WTC11 (cell line): ENCODE measurements at regions of chr6 and their contacts with region 1.

Region 1: DNA sequence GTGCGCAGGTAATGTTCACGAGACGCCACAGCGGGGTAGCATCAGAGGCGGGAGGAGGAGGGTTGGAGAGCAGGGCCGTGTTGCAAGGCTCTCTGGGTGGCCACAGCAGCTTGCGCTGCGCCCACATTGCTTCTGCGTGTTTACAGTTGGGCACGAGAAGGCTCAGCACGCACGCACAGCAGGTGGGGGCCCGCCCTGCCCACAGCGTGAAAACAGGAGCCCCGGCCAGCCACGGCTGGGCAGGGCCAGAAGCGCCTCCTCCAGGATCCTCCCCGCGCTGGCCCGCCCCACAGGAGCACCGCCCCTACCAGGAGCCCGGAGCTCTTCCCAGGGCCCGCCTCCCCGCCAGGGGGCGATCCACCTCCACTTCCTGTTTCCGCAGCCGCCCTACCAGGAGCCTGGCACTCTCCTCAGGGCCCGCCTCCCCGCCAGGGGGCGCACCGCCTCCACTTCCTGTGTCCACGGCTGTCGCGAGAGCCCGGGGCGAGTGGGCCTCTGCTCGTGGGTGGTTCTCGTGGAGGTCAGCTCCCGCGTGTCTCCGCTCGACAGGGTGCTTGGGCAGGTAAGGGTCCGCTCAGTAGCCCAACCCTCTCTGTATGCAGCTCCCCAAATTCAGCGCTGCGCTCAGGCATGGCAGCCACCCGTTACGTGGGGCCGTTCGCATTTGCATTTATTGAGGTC is at the start of gene FAM50B:
- DNase-seq: peak; percentile 98
- ATAC-seq: peak; percentile 98
- H3K4me3 Mint-ChIP-seq: peak within 1 kb of the TSS; percentile 80
- H3K27ac Mint-ChIP-seq: no peak within 1 kb of the TSS
- H3K4me1 Mint-ChIP-seq: peaks cover 9% of the 10 kb centered on the region
- H3K27me3 Mint-ChIP-seq: peaks cover 6% of the 10 kb centered on the region
- CTCF ChIP-seq: peak; percentile 100
- total RNA-seq, gene FAM50B: 2.1 to 3.6 TPM (median 3.3 TPM) in 3 replicates

Region 2: GRCh38 chr6:3794092-3794491 is 55.0 kb before region 1 on chr6:
- CTCF ChIA-PET with region 1: interaction called, 28 read pairs
- POLR2A ChIA-PET with region 1: no interaction called
- DNase-seq: no peak
- ATAC-seq: peak; percentile 71
- H3K4me3 Mint-ChIP-seq: no peak overlapping the region
- H3K27ac Mint-ChIP-seq: peak overlapping the region; percentile 53
- H3K4me1 Mint-ChIP-seq: peaks cover 23% of the 10 kb centered on the region
- H3K27me3 Mint-ChIP-seq: no peaks in the 10 kb centered on the region
- CTCF ChIP-seq: no peak

Region 3: GRCh38 chr6:3861424-3861823 is 12.4 kb after region 1 on chr6:
- CTCF ChIA-PET with region 1: interaction called, 78 read pairs
- POLR2A ChIA-PET with region 1: no interaction called
- DNase-seq: no peak
- ATAC-seq: no peak
- H3K4me3 Mint-ChIP-seq: no peak overlapping the region
- H3K27ac Mint-ChIP-seq: no peak overlapping the region
- H3K4me1 Mint-ChIP-seq: peaks cover 15% of the 10 kb centered on the region
- H3K27me3 Mint-ChIP-seq: peaks cover 6% of the 10 kb centered on the region; the same call in 1 of the 2 replicates
- CTCF ChIP-seq: no peak

Region 4: DNA sequence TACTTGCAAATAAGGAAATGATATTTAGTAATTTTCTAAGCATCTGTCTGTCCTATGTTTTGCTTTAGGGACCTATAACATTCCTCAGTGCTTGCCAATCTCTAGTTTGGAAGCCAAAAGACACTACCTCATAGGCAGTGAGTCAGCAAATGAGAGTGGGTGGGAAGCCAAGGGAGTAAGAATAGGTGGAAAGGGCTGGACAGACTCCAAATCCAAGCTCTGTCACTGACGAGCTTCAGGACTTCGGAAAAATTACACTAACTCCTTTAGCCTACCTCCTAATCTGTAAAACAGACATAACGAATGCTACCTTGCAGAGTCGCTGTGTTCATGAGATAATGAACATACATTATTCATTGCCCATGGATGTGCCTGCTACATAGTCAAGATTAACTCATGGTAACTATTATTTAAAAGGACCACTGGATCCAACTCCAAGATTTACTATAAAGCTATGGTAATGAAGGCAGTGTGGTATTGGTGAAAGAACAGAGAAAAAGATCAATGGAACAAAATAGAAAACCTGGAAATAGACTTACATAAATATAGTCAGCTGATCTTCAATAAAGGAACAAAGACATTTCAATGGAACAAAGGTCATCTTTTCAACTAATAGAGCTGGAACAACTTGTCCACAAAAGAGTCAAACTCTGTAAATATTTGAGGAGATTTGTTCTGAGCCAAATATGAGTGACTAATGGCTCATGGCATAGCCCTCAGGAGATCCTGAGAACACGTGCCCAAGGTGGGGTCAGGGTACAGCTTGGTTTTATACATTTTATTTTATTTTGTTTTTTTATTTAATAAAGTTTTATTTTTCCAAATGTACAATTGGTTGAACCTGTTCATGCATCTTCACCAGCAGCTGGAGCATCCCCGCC is 64.3 kb after region 1 on chr6:
- CTCF ChIA-PET with region 1: interaction called, 31 read pairs
- POLR2A ChIA-PET with region 1: no interaction called
- DNase-seq: no peak
- ATAC-seq: no peak
- H3K4me3 Mint-ChIP-seq: no peak overlapping the region
- H3K27ac Mint-ChIP-seq: no peak overlapping the region
- H3K4me1 Mint-ChIP-seq: peaks cover 26% of the 10 kb centered on the region
- H3K27me3 Mint-ChIP-seq: peaks cover 20% of the 10 kb centered on the region
- CTCF ChIP-seq: no peak

Region 5: DNA sequence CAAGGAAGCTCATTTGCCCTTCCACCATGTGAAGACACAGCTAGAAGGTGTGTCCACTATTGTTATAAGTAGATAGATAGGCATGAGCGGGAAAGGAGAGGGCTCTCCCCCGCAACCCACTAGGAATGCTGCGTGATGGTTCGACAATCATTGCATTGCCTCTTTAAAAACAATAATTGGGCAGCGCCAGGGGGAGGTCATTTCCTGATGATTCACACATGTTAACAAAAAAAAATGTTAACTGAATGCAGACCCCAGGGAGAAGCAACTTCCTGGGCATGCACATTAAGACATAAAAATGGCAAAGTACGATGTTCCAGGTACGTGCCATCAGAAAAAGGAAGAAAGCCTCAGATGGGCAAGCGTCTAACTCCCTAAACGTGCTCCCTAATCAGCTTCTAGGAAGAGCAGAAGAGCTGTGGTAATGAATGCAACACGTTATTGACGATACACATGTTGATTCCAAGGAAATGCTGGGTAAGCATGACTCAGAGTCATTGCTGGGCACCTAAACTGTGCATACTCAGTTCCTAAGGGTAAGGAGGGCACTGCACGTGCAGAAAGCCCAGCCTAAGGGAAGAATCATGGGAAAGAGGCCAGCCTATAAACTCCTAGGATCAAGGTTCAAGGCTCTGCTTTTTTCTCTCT is 116.1 kb after region 1 on chr6:
- CTCF ChIA-PET with region 1: interaction called, 10 read pairs
- POLR2A ChIA-PET with region 1: no interaction called
- DNase-seq: no peak
- ATAC-seq: no peak
- H3K4me3 Mint-ChIP-seq: no peak overlapping the region
- H3K27ac Mint-ChIP-seq: no peak overlapping the region
- H3K4me1 Mint-ChIP-seq: no peaks in the 10 kb centered on the region
- H3K27me3 Mint-ChIP-seq: no peaks in the 10 kb centered on the region; the same call in 1 of the 2 replicates
- CTCF ChIP-seq: no peak

Region 6: GRCh38 chr6:4021133-4021853 is 172.2 kb after region 1 on chr6:
- CTCF ChIA-PET with region 1: interaction called, 21 read pairs
- POLR2A ChIA-PET with region 1: interaction called, 3 read pairs
- DNase-seq: peak; percentile 90
- ATAC-seq: peak; percentile 83
- H3K4me3 Mint-ChIP-seq: peak overlapping the region; percentile 87
- H3K27ac Mint-ChIP-seq: peak overlapping the region; percentile 98
- H3K4me1 Mint-ChIP-seq: peaks cover 54% of the 10 kb centered on the region
- H3K27me3 Mint-ChIP-seq: no peaks in the 10 kb centered on the region
- CTCF ChIP-seq: no peak